Activated B cell treated with CpG ODN at 0.5 μM for 24 hours (primary cell): ENCODE measurements at regions of chr3 and their contacts with region 1.

Region 1: GRCh38 chr3:32438596-32439344 is 47.1 kb downstream of the CMTM7 start:
- DNase-seq: no peak
- ATAC-seq: peak; percentile 76
- H3K4me3 Mint-ChIP-seq: peak overlapping the region; percentile 76
- H3K27ac Mint-ChIP-seq: peak overlapping the region; percentile 94
- H3K4me1 Mint-ChIP-seq: peaks cover 96% of the 10 kb centered on the region
- H3K27me3 Mint-ChIP-seq: no peaks in the 10 kb centered on the region
- CTCF ChIP-seq: no peak

Region 2: DNA sequence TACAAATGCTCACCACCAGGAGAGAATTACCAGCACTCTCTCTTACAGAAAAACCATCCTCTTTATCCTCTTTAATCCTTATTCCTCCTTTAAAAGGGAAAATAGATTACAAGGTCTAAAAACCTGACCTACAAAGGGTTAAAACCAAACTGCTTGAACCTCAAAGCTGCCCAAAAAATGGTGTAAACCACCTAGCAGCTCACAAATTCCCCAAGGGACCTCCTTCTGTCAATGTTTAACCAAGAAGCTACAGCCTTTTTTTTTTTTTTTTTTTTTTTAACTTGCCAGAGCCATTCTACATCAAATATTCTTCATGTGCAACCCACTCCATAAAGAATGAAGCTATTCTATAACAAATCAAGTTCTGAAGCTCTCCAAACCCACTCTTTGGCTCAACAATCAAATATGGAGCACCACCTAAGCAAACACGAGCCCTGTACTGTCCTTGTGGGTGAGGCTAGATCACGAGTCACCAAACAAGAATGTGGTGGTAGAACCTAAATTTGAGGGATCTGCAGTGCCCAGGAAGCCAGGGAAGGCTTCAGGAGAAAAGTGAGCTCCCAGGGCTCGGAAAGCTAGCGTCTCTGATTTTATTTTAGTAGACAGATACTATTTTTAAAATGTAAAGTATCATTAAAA is 477.9 kb before region 1 on chr3:
- CTCF ChIA-PET with region 1: no interaction called
- POLR2A ChIA-PET with region 1: no interaction called
- intact Hi-C with region 1: loop called (anchors 10 kb)
- DNase-seq: no peak
- ATAC-seq: peak; percentile 66
- H3K4me3 Mint-ChIP-seq: peak overlapping the region; percentile 78
- H3K27ac Mint-ChIP-seq: peak overlapping the region; percentile 94
- H3K4me1 Mint-ChIP-seq: peaks cover 80% of the 10 kb centered on the region
- H3K27me3 Mint-ChIP-seq: no peaks in the 10 kb centered on the region
- CTCF ChIP-seq: no peak

Region 3: DNA sequence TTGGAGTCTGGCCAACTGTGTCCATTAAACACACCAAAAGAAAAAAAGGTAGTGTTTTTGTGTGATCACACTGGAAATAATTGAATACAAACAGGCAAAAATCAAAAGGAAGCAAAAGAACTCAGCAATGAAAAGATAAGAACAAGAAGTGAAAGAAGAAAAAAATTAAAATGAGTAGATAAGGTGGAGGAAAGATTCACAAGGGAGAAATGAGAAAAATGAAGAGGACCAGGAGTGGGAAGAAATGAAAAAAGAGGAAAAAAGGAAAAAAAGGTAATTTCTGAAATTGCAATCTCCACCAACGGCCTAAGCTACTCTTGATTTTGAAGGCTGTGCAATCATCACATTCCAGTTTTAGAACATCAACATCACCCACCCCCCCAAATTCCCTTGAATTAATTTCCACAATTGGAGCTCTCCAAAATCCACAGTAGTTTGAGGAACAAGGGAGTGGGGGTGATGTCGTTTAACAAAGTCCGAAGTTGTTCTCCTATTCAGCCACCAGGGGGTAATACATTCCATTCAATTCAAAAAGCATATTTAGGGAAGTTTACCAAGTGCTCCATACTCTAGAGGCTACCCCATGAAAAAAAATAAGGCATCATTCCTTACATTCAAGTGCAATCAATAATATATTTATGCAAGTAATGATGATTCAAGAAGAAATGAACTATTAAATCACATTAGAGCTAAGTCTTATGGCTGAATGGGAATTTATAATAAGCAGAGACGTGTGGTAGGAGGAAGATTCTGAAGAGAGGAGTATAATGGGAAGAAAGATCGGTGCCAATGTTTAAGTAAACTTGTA is 419.8 kb before region 1 on chr3:
- CTCF ChIA-PET with region 1: no interaction called
- POLR2A ChIA-PET with region 1: no interaction called
- intact Hi-C with region 1: no loop called
- DNase-seq: no peak
- ATAC-seq: peak; percentile 65
- H3K4me3 Mint-ChIP-seq: no peak overlapping the region
- H3K27ac Mint-ChIP-seq: no peak overlapping the region
- H3K4me1 Mint-ChIP-seq: peaks cover 12% of the 10 kb centered on the region
- H3K27me3 Mint-ChIP-seq: no peaks in the 10 kb centered on the region
- CTCF ChIP-seq: no peak

Region 4: DNA sequence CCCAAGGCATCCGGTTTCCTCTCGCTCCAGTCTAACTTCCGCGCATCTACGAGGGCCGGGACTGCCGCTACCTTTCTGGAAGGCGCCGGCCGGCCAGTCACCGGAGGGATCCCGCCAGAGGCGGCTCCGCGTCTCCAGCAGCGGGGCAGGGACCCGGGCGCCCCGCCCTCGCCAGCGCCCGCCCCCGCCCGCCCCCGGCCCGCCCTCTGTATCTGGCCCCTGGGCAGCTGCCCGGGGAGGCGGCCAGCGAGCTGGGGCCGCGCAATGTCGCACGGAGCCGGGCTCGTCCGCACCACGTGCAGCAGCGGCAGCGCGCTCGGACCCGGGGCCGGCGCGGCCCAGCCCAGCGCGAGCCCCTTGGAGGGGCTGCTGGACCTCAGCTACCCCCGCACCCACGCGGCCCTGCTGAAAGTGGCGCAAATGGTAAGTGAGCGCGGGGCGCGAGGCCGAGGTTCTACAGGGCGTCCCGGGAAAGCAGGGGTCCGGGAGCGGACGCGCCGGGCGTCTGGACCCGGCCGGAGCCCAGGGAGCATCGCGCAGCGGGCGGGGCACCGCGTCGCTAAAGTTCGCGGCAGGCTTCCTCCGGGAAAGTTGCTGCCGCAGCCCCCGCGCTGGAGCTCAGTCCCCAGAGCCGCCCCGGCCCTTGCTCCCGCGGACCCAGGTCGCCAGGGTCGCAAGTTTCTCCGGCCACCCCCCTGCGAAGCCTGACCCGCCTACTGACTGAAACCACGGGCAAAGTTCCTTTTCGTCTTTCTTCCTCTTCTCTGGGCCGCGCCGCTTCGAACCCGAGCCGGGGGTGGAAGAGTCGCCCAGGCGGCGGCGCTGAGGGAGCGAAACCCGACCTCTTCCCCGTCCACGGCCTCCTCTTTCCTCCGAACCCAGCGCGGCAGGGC is 46.9 kb before region 1 on chr3 and contains the start of gene CMTM7:
- CTCF ChIA-PET with region 1: interaction called, 6 read pairs
- POLR2A ChIA-PET with region 1: interaction called, 61 read pairs
- intact Hi-C with region 1: loop called (anchors 1 kb)
- DNase-seq: peak; percentile 65
- ATAC-seq: peak; percentile 64
- H3K4me3 Mint-ChIP-seq: peak within 1 kb of the TSS; percentile 97
- H3K27ac Mint-ChIP-seq: peak within 1 kb of the TSS; percentile 90
- H3K4me1 Mint-ChIP-seq: peaks cover 56% of the 10 kb centered on the region
- H3K27me3 Mint-ChIP-seq: no peaks in the 10 kb centered on the region
- CTCF ChIP-seq: no peak
- total RNA-seq, gene CMTM7: 70.5 and 82.1 TPM in 2 replicates

Region 5: DNA sequence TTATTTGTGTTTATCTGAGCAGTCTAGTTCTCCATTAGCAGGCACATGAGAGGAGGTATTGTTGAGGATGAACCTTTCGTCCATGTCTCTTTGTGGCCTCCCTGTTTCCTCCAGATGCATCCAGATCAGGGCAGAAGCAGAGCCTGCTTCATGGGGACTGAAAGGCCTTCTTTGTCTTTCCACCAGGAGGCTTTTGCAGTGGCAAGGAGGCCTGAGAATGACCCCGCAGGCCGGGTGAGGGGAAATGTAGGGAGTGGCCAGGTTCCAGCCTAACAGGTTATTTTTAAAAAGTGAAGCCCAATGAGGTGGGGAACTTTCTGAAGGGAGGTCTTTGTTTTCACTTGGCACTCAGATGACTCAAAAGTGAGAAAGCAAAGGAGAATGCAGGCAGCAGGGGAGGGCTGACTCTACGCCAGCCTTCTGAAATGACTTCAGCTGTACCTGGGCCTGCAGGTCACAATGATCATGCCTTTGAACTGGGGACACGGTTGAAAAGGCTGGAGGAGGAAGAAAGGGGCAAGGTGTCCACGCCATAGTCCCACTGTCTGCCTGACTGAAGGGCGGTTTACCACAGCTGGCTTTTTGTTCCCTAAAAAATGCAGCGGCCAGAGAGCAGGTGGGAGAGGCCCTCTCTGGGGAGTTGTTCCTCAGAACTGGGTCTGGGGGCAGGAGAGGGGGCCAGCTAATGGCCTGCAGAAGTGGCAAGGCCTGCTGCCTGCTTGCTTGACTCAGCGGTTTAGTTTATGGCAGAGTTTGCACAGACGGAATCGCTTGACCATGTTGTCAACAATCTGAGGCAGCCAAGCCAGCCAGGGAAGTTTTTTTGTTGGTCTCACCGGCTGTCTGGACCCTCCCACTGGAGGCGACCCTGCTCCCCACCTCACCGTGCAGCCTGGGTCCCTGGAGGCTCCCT is 18.4 kb before region 1 on chr3:
- CTCF ChIA-PET with region 1: interaction called, 14 read pairs
- POLR2A ChIA-PET with region 1: interaction called, 272 read pairs
- intact Hi-C with region 1: loop called (anchors 1 kb)
- DNase-seq: peak; percentile 51
- ATAC-seq: peak; percentile 81
- H3K4me3 Mint-ChIP-seq: peak overlapping the region; percentile 76
- H3K27ac Mint-ChIP-seq: peak overlapping the region; percentile 88
- H3K4me1 Mint-ChIP-seq: peaks cover 91% of the 10 kb centered on the region
- H3K27me3 Mint-ChIP-seq: no peaks in the 10 kb centered on the region
- CTCF ChIP-seq: no peak

Region 6: GRCh38 chr3:32467333-32468070 is 28.7 kb after region 1 on chr3:
- CTCF ChIA-PET with region 1: interaction called, 65 read pairs
- POLR2A ChIA-PET with region 1: interaction called, 63 read pairs
- intact Hi-C with region 1: loop called (anchors 1 kb)
- DNase-seq: peak; percentile 84
- ATAC-seq: peak; percentile 79
- H3K4me3 Mint-ChIP-seq: peak overlapping the region; percentile 56
- H3K27ac Mint-ChIP-seq: peak overlapping the region; percentile 84
- H3K4me1 Mint-ChIP-seq: peaks cover 62% of the 10 kb centered on the region
- H3K27me3 Mint-ChIP-seq: no peaks in the 10 kb centered on the region
- CTCF ChIP-seq: peak; percentile 90

Region 7: DNA sequence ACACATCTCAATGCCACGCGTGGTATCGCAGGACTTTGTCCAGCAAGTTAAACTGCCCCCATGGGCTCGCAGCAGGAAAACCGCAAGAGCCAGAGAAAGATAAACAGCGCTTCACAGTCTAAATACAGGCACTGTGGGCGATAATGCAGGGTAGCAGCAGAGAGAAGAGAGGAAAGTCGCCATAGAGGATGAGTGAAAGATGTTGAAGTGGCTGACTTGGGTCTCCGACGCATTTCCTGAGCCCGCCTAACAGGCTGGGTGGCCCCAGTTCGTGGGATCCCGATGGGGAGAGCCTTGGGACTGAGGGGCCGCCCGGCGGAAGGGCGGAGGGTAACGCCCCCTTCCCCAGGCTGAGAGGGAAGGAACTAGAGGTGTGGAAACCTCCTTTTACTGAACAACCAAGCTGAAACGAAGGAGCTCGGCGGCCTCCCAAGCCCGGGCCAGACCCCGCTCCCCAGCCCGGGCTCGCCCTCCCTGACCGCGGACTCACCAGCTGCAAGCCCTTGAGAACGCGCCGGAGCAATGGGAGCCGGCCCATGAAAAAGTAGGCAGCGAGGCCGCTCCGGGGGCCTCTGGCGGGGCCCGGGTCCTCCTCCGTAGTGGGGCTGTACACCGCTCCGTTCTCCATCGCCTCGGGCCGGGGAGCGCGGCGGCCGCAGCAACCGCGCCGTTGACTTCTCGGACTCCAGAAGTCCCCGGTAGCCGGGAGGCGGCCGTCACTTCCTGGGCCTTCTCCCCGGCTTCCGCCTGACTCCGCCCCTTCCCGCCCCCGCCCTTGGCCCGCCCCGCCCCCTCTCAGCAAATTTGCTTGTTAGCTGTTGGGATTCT is 63.6 kb after region 1 on chr3 and contains the start of gene CMTM6:
- CTCF ChIA-PET with region 1: no interaction called
- POLR2A ChIA-PET with region 1: interaction called, 17 read pairs
- intact Hi-C with region 1: loop called (anchors 1 kb)
- DNase-seq: peak; percentile 67
- ATAC-seq: peak; percentile 80
- H3K4me3 Mint-ChIP-seq: peak within 1 kb of the TSS; percentile 98
- H3K27ac Mint-ChIP-seq: peak within 1 kb of the TSS; percentile 90
- H3K4me1 Mint-ChIP-seq: peaks cover 41% of the 10 kb centered on the region
- H3K27me3 Mint-ChIP-seq: no peaks in the 10 kb centered on the region
- CTCF ChIP-seq: no peak
- total RNA-seq, gene CMTM6: 84.6 and 90.1 TPM in 2 replicates

Region 8: GRCh38 chr3:32531010-32531647 is 92.4 kb after region 1 on chr3:
- CTCF ChIA-PET with region 1: no interaction called
- POLR2A ChIA-PET with region 1: no interaction called
- intact Hi-C with region 1: no loop called
- DNase-seq: no peak
- ATAC-seq: no peak
- H3K4me3 Mint-ChIP-seq: no peak overlapping the region
- H3K27ac Mint-ChIP-seq: no peak overlapping the region
- H3K4me1 Mint-ChIP-seq: peaks cover 1% of the 10 kb centered on the region
- H3K27me3 Mint-ChIP-seq: no peaks in the 10 kb centered on the region
- CTCF ChIP-seq: no peak

Region 9: GRCh38 chr3:32684800-32685542 is 246.2 kb after region 1 on chr3 and contains the start of gene CNOT10:
- CTCF ChIA-PET with region 1: no interaction called
- POLR2A ChIA-PET with region 1: interaction called, 3 read pairs
- intact Hi-C with region 1: loop called (anchors 1 kb)
- DNase-seq: peak; percentile 95
- ATAC-seq: peak; percentile 95
- H3K4me3 Mint-ChIP-seq: peak within 1 kb of the TSS; percentile 93
- H3K27ac Mint-ChIP-seq: peak within 1 kb of the TSS; percentile 89
- H3K4me1 Mint-ChIP-seq: peaks cover 31% of the 10 kb centered on the region
- H3K27me3 Mint-ChIP-seq: no peaks in the 10 kb centered on the region
- CTCF ChIP-seq: no peak
- total RNA-seq, gene CNOT10: 48.0 and 55.5 TPM in 2 replicates